Activated CD8-positive, alpha-beta memory T cell treated with anti-CD3 and anti-CD28 coated beads, Interleukin-2, amount 10 ng/mL, durations not matched to agents 7 days and 5 days (primary cell): ENCODE measurements at regions of chr3 and their contacts with region 1.

Region 1: GRCh38 chr3:43345877-43346276 is 59.5 kb downstream of the SNRK start:
- DNase-seq: peak; percentile 77
- ATAC-seq: peak; percentile 72
- H3K4me3 Mint-ChIP-seq: no peak overlapping the region
- H3K27ac Mint-ChIP-seq: peak overlapping the region; percentile 98
- H3K4me1 Mint-ChIP-seq: peaks cover 75% of the 10 kb centered on the region
- H3K27me3 Mint-ChIP-seq: no peaks in the 10 kb centered on the region

Region 2: DNA sequence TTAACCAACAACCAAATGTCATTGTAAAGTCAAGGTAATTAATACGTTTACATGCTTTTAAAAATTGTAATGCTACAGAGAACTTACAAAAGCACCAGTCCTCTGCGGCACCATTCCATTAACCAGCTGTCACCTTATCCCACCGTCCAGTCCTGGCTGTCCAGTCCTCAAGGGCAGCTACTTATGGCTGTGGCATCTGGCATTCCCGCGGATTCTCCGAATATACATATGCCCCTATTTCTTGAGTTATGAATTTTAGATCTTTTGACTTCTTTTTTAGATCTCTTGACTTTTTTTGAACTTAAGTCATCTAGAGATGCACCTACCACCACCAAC is 239.6 kb before region 1 on chr3:
- CTCF ChIA-PET with region 1: no interaction called
- DNase-seq: no peak
- ATAC-seq: peak; percentile 11
- H3K4me3 Mint-ChIP-seq: peak overlapping the region; percentile 71
- H3K27ac Mint-ChIP-seq: no peak overlapping the region
- H3K4me1 Mint-ChIP-seq: peaks cover 12% of the 10 kb centered on the region
- H3K27me3 Mint-ChIP-seq: no peaks in the 10 kb centered on the region

Region 3: GRCh38 chr3:43286115-43286840 is 59.6 kb before region 1 on chr3 and contains the start of gene SNRK:
- CTCF ChIA-PET with region 1: interaction called, 15 read pairs
- DNase-seq: peak; percentile 91
- ATAC-seq: peak; percentile 83
- H3K4me3 Mint-ChIP-seq: peak within 1 kb of the TSS; percentile 99
- H3K27ac Mint-ChIP-seq: peak within 1 kb of the TSS; percentile 97
- H3K4me1 Mint-ChIP-seq: peaks cover 35% of the 10 kb centered on the region
- H3K27me3 Mint-ChIP-seq: peaks cover 2% of the 10 kb centered on the region
- total RNA-seq, gene SNRK: 47.7 to 57.2 TPM

Region 4: GRCh38 chr3:43296565-43296964 is 49.3 kb before region 1 on chr3:
- CTCF ChIA-PET with region 1: interaction called, 12 read pairs
- DNase-seq: peak; percentile 81
- ATAC-seq: peak; percentile 93
- H3K4me3 Mint-ChIP-seq: peak overlapping the region; percentile 74
- H3K27ac Mint-ChIP-seq: peak overlapping the region; percentile 87
- H3K4me1 Mint-ChIP-seq: peaks cover 73% of the 10 kb centered on the region
- H3K27me3 Mint-ChIP-seq: no peaks in the 10 kb centered on the region

Region 5: DNA sequence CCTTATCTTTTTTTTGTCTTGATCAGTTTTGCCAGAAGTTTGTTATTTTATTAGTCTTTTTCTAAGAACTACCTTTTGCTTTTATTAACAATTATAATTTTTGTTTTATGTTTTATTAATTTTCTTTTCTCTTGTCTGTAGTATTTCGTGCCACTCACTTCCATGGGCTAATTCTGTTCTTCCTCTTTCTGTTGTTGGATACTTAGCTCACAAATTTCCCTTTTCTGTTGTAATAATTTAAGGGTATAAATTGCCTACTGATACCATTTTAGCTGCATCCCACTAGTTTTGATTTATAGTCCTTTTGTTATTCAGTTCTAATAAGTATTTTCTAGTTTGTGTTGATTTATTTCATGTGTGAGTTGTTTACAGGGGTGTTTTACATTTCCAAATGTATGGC is 10.9 kb before region 1 on chr3:
- CTCF ChIA-PET with region 1: interaction called, 15 read pairs
- DNase-seq: no peak
- ATAC-seq: no peak
- H3K4me3 Mint-ChIP-seq: no peak overlapping the region
- H3K27ac Mint-ChIP-seq: no peak overlapping the region
- H3K4me1 Mint-ChIP-seq: peaks cover 3% of the 10 kb centered on the region
- H3K27me3 Mint-ChIP-seq: no peaks in the 10 kb centered on the region